Pancreas (tissue), 10 donors: ENCODE measurements at regions of chrX and their contacts with region 1.

Region 1: DNA sequence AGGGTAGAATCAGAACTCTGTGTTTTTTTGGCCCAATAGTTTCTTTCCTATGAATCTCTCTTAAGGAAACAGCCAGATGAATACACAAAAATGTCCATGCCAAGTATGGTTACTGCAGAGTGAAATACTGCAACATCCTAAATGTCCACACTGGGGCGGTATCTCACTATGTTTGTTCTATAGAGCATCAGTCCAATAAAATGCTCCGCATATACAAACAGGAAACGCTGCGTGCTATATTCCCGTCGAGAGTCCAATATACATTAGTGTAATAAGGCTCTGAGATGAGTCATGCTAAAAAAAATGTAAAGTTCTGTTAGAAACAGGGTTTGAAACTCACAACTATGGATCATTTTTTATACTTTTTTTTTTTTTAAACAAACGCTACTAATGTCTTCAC is 72.9 kb upstream of the ENOX2 start:
- DNase-seq: peak in 2 of 6 donors; percentile 2 to 43
- ATAC-seq: peak; percentile 58 to 88 (median 84)
- H3K4me3 ChIP-seq: no peak overlapping the region
- H3K27ac ChIP-seq: no peak overlapping the region
- H3K4me1 ChIP-seq: no peaks in the 10 kb centered on the region
- H3K27me3 ChIP-seq: peaks cover 0 to 11% (median 4%) of the 10 kb centered on the region in 4 donors
- CTCF ChIP-seq: peak in 3 of 4 donors; percentile 32 to 37 (median 35)

Region 2: DNA sequence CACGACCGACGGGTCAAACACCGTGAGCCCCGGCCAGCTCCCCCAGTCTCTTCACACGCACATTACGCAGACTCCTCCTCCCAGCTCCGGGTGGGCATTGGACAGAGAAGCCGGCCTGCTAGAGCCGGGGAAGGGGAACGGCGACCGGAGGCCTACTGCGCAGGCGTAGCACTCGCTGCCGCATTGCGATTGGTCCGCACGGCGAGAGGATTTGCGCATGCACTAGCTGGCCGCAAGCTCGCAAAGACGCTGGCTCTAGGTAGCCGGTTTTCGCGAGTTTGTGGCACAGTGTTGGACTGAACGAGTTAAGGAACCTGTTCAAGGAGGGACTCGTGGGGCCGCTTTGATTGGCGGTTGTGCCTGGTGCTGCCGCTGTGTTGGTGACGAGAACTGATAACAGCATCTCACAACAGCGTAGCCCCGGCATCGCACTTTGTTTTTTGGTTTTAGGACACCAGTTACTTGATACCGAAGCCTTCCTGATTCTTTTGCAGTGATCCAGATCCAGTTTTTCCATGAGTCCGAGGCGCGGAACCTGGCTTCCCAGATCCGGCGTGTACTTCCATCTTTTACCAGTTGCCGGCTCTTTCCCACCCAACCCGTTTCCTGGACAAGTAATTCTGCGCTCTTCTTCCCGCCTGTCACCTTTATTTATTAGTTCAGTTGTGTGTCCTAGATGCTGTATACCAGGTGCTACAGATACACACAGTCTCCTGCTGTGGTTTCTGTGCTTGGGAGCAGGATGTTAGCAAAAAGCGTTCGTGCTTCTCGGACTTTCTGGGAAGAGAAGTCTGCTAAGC is 810.0 kb before region 1 on chrX and contains the start of gene AIFM1:
- intact Hi-C with region 1: no loop called
- DNase-seq: peak; percentile 89 to 95 (median 90)
- ATAC-seq: peak; percentile 91 to 97 (median 97)
- H3K4me3 ChIP-seq: peak within 1 kb of the TSS; percentile 22 to 57 (median 34)
- H3K27ac ChIP-seq: peak within 1 kb of the TSS; percentile 44 to 89 (median 72)
- H3K4me1 ChIP-seq: peaks cover 0 to 4% (median 0%) of the 10 kb centered on the region in 3 donors
- H3K27me3 ChIP-seq: peaks cover 0 to 6% (median under 1%) of the 10 kb centered on the region in 4 donors
- CTCF ChIP-seq: no peak
- total RNA-seq, gene AIFM1: 12.1 to 19.7 (median 15.3) TPM

Region 3: DNA sequence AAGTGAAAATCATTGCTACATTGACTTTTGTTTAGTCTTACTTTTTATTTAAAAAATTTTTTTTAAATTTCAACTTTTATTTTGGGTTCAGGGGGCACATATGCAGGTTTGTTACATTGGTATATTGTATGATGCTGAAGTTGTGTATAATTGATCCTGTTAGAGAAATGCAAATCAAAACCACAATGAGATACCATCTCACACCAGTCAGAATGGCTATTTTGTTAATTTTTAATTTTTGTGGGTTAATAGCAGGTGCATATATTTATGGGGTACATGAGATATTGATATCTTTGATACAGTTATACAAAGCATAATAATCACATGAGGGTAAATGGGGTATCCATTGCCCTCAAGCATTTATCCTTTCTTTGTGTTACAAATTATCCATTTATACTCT is 540.0 kb before region 1 on chrX:
- intact Hi-C with region 1: no loop called
- DNase-seq: no peak
- ATAC-seq: no peak
- H3K4me3 ChIP-seq: no peak overlapping the region
- H3K27ac ChIP-seq: no peak overlapping the region
- H3K4me1 ChIP-seq: no peaks in the 10 kb centered on the region
- H3K27me3 ChIP-seq: peaks cover 0 to 9% (median 0%) of the 10 kb centered on the region in 4 donors
- CTCF ChIP-seq: no peak

Region 4: GRCh38 chrX:131633285-131633917 is 657.5 kb after region 1 on chrX:
- intact Hi-C with region 1: loop called in 2 of 3 experiments (anchors 10 kb)
- DNase-seq: peak in 5 of 6 donors; percentile 24 to 69 (median 55)
- ATAC-seq: peak; percentile 66 to 94 (median 91)
- H3K4me3 ChIP-seq: no peak overlapping the region
- H3K27ac ChIP-seq: no peak overlapping the region
- H3K4me1 ChIP-seq: no peaks in the 10 kb centered on the region
- H3K27me3 ChIP-seq: peaks cover 0 to 30% (median 12%) of the 10 kb centered on the region in 4 donors
- CTCF ChIP-seq: peak; percentile 75 to 82 (median 79)